ENCODE measurements at regions of chr21 and their contacts with region 1.

Region 1: DNA sequence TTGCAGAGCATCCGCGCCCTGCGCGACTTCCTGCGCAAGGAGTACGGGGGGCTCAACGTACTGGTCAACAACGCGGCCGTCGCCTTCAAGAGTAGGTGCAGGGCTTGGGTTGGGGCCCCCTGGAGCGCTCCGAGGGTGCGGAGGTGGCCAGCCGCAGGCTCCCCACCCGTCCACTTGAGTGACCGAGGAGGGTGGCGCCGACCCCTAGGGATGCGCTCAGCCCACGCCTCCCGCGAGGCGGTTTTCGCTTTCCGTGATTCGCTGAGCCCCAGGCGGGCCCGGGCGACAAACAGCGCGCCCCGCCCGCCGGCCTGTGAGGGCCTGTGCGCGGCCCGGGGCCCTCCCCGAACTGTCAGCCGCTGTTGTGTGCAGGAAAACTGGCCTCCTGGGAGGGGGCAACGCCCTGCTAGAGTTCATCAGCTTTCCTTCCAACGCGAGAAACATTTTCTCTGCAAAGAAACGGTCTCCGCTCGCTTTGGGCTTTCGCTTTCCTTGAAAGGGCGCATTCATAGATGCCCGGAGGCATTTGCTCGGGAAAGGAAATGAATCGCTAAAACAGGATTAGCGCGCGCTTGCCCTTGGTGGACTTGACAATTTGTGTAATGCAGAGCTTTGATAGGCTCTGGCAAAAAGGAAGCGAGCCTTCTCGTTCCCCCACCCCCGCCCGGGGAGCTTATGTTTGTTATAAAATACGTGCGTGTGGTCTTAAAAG is 668 bp downstream of the CBR3 start:
- DNase-seq: peak in 4 of 5 donors; percentile 49 to 61 (median 53)
- H3K4me3 ChIP-seq: peak overlapping the region; percentile 58 to 86
- H3K4me3 Mint-ChIP-seq: peak overlapping the region; percentile 89 to 96 (median 95)
- H3K27ac ChIP-seq: peak overlapping the region; percentile 51
- H3K27ac Mint-ChIP-seq: peak overlapping the region; percentile 86 to 95 (median 92)
- H3K4me1 ChIP-seq: peaks cover 25% of the 10 kb centered on the region
- H3K4me1 Mint-ChIP-seq: peaks cover 12 to 35% (median 21%) of the 10 kb centered on the region in 4 donors
- H3K27me3 ChIP-seq: no peaks in the 10 kb centered on the region
- H3K27me3 Mint-ChIP-seq: no peaks in the 10 kb centered on the region

Region 2: GRCh38 chr21:36060159-36060921 is 75.2 kb before region 1 on chr21 and contains the start of gene SETD4:
- CTCF ChIA-PET with region 1: no interaction called
- POLR2A ChIA-PET with region 1: interaction called, 15 read pairs
- intact Hi-C with region 1: no loop called
- DNase-seq: peak; percentile 91 to 95 (median 93)
- H3K4me3 ChIP-seq: peak within 1 kb of the TSS; percentile 94 to 98
- H3K4me3 Mint-ChIP-seq: peak within 1 kb of the TSS; percentile 93 to 99 (median 96)
- H3K27ac ChIP-seq: peak within 1 kb of the TSS; percentile 83
- H3K27ac Mint-ChIP-seq: peak within 1 kb of the TSS; percentile 98 to 99 (median 98)
- H3K4me1 ChIP-seq: peaks cover 13% of the 10 kb centered on the region
- H3K4me1 Mint-ChIP-seq: peaks cover 6 to 34% (median 14%) of the 10 kb centered on the region in 4 donors
- H3K27me3 ChIP-seq: no peaks in the 10 kb centered on the region
- H3K27me3 Mint-ChIP-seq: no peaks in the 10 kb centered on the region
- total RNA-seq, gene SETD4: 30.3 to 31.0 TPM

Region 3: GRCh38 chr21:36069713-36070573 is 65.6 kb before region 1 on chr21 and contains the start of gene CBR1:
- CTCF ChIA-PET with region 1: no interaction called
- POLR2A ChIA-PET with region 1: interaction called, 13 read pairs
- intact Hi-C with region 1: no loop called
- DNase-seq: peak; percentile 85 to 87 (median 87)
- H3K4me3 ChIP-seq: peak within 1 kb of the TSS; percentile 51 to 87
- H3K4me3 Mint-ChIP-seq: peak within 1 kb of the TSS; percentile 90 to 95 (median 92)
- H3K27ac ChIP-seq: peak within 1 kb of the TSS; percentile 69
- H3K27ac Mint-ChIP-seq: peak within 1 kb of the TSS; percentile 73 to 93 (median 85)
- H3K4me1 ChIP-seq: peaks cover 33% of the 10 kb centered on the region
- H3K4me1 Mint-ChIP-seq: peaks cover 28 to 43% (median 35%) of the 10 kb centered on the region in 4 donors
- H3K27me3 ChIP-seq: no peaks in the 10 kb centered on the region
- H3K27me3 Mint-ChIP-seq: no peaks in the 10 kb centered on the region
- total RNA-seq, gene CBR1: 23.0 to 25.2 TPM